Panc1 (cell line): ENCODE measurements at regions of chr10 and their contacts with region 1.

Region 1: DNA sequence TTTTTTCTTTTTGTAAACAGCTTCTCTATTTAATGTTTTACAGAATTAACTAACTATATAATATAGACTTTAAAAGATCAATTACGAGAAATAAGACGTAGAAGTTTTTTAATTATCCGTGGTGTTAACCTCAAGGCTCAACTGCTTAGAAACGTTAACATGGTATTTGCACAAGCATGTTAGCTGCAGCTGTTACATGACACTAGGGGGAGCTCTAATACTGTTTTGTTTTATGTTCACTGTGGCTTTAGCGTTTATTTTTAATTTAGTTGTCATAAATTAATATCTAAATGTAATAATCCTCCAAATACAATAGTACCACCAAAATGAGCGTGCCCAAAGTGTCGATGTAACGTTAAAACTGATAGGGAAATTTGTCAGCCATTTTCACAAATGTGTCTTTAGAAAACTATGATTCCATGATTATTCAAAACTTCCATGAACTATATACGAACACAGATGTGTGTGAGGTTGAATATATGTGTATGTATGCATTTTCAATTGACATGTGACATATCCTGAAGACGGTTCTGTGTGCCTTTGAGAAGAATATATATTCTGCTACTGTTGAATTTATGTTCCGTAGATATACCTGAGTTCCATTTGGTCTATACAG is 828.8 kb upstream of the MBL2 start:
- DNase-seq: peak; percentile 32
- ATAC-seq: peak; percentile 81; the same call in 1 of the 2 replicates
- H3K4me3 ChIP-seq: no peak overlapping the region
- H3K27ac ChIP-seq: no peak overlapping the region
- H3K4me1 ChIP-seq: no peaks in the 10 kb centered on the region
- H3K27me3 ChIP-seq: no peaks in the 10 kb centered on the region
- CTCF ChIP-seq: peak; percentile 86; the same call in 1 of the 2 replicates

Region 2: DNA sequence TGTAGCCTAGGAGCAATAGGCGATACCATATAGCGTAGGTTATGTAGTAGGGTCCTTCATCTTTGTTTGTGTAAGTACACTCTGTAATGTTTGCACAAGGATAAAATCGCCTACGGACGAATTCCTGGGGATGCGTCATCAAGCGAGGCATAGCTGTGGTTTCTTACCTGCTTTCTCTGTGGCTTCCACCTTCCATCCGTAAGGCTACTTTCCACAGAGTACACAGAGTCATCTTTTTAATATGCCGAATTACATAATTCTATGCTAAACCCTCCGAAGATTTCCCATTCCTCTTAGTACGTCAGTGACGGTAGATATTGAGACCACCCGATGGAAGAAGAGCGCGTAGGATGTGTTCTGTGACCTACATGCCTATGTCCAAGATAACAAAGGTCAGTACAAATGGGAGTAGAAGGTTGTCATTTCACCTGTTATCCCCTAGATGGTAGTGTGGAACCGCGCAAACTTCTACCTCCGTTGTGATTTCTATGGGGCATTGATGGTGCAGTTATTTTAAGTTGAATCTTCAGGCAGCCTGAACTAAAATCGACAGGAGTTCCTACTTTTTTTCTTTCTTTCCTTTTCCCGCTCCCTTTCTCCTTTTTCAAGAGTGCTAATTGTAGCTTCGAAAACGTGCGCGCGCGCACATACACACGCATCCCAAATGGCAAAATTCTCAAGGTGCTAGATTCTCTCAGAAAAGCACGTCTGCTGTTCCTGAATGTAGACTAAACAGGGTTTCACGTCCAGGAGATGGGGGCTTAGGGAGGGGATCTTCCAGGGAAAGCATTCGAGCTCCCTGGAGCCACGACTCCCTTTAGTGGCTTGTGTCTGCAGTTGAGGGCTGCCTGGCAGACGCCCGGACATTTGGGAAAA is 717.1 kb before region 1 on chr10:
- CTCF ChIA-PET with region 1: no interaction called
- POLR2A ChIA-PET with region 1: no interaction called
- in situ Hi-C with region 1: no loop called
- intact Hi-C with region 1: loop called (anchors 10 kb)
- DNase-seq: peak; percentile 61
- ATAC-seq: peak; percentile 96
- H3K4me3 ChIP-seq: peak overlapping the region; percentile 17 to 40; a peak in 3 of 4 replicates
- H3K27ac ChIP-seq: peak overlapping the region; percentile 74
- H3K4me1 ChIP-seq: peaks cover 7% of the 10 kb centered on the region
- H3K27me3 ChIP-seq: no peaks in the 10 kb centered on the region
- CTCF ChIP-seq: peak; percentile 93

Region 3: DNA sequence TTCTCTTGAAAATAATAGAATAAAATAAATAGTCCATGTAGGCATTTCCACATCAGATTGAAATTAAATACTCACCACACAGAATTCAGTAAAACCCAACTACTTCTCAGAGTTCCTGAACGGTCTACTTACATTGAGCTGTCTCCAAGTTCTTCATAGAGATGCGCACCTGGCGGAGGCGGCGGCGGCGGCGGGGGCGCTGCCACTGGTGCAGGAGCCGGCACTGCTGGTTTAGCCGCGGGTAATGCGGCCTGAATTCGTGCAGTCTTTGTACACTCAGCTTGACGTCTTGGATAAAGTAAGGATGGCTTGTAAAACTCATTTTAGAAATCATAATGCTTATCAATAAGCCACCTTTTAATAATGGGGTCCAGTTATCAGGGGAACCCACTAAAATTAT is 225.9 kb after region 1 on chr10:
- CTCF ChIA-PET with region 1: no interaction called
- POLR2A ChIA-PET with region 1: no interaction called
- in situ Hi-C with region 1: no loop called
- intact Hi-C with region 1: loop called (anchors 10 kb)
- DNase-seq: no peak
- ATAC-seq: no peak
- H3K4me3 ChIP-seq: no peak overlapping the region
- H3K27ac ChIP-seq: no peak overlapping the region
- H3K4me1 ChIP-seq: no peaks in the 10 kb centered on the region
- H3K27me3 ChIP-seq: no peaks in the 10 kb centered on the region; the same call in 1 of the 2 replicates
- CTCF ChIP-seq: no peak

Region 4: GRCh38 chr10:53997953-53998352 is 396.6 kb after region 1 on chr10:
- CTCF ChIA-PET with region 1: interaction called, 4 read pairs
- POLR2A ChIA-PET with region 1: no interaction called
- in situ Hi-C with region 1: no loop called
- intact Hi-C with region 1: loop called (anchors 10 kb)
- DNase-seq: no peak
- ATAC-seq: no peak
- H3K4me3 ChIP-seq: no peak overlapping the region
- H3K27ac ChIP-seq: no peak overlapping the region
- H3K4me1 ChIP-seq: no peaks in the 10 kb centered on the region
- H3K27me3 ChIP-seq: no peaks in the 10 kb centered on the region
- CTCF ChIP-seq: peak; percentile 47; the same call in 1 of the 2 replicates

Region 5: DNA sequence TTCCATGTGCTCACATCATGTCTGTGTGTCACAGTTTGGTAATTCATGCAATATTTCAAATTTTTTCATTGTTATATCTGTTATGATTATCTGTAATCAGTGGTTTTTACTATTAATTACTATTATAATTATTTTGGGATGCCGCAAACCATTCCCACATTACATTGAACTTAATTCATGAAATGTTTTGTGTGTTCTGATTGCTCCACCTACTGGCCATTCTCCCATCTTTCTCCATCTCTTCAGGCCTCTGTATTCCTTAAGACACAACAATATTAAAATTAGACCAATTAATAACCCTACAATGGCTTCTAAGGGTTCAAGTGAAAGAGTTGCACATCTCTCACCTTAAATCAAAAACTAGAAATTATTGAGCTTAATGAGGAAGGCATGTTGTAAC is 801.2 kb after region 1 on chr10:
- CTCF ChIA-PET with region 1: no interaction called
- POLR2A ChIA-PET with region 1: no interaction called
- in situ Hi-C with region 1: no loop called
- intact Hi-C with region 1: loop called (anchors 10 kb)
- DNase-seq: peak; percentile 7
- ATAC-seq: no peak
- H3K4me3 ChIP-seq: no peak overlapping the region
- H3K27ac ChIP-seq: no peak overlapping the region
- H3K4me1 ChIP-seq: no peaks in the 10 kb centered on the region
- H3K27me3 ChIP-seq: no peaks in the 10 kb centered on the region
- CTCF ChIP-seq: peak; percentile 58; the same call in 1 of the 2 replicates

Region 6: DNA sequence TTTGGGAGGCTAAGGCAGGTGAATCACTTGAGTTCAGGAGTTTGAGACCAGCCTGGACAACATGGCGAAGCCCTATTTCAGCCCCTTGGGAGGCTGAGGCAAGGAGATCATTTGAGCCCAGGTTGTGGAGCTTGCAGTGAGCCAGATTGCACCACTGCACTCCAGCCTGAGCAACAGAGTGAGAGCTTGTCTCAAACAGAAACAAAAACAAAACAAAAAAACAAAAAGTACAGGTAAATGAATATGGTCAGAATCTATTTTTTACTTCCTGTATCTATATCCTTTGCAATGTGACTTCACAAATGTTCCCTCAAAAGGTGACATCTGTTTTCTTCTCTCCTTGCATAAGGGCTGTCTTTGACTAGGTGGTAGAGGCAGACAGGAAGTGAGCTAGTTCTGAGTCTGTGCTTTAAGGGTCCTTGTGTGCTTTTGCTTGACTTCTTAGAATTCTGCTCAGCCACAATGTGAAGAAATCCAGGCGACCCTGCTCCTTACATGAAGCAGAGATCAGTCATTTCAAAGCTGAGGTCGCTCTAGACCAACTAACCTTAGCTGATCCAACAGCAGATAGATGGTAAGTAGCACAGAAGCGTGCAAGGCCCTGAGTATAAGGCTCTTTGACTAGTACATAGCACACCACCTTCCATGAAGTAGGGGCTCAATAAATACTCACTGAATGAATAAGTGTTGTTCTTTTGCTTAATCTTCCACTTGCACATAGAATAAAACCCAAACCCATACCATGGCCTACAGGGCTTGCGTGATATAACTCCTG is 1622.8 kb after region 1 on chr10:
- CTCF ChIA-PET with region 1: no interaction called
- POLR2A ChIA-PET with region 1: no interaction called
- in situ Hi-C with region 1: no loop called
- intact Hi-C with region 1: no loop called
- DNase-seq: no peak
- ATAC-seq: no peak
- H3K4me3 ChIP-seq: no peak overlapping the region
- H3K27ac ChIP-seq: no peak overlapping the region
- H3K4me1 ChIP-seq: no peaks in the 10 kb centered on the region
- H3K27me3 ChIP-seq: no peaks in the 10 kb centered on the region; the same call in 1 of the 2 replicates
- CTCF ChIP-seq: no peak